ENCODE measurements at regions of chr2 and their contacts with region 1.

Region 1: GRCh38 chr2:86368161-86368824 is 30.9 kb upstream of the REEP1 start:
- DNase-seq: peak; percentile 43
- H3K4me3 Mint-ChIP-seq: no peak overlapping the region
- H3K27ac Mint-ChIP-seq: no peak overlapping the region
- H3K4me1 Mint-ChIP-seq: peaks cover 25% of the 10 kb centered on the region
- H3K27me3 Mint-ChIP-seq: peaks cover 2% of the 10 kb centered on the region

Region 2: DNA sequence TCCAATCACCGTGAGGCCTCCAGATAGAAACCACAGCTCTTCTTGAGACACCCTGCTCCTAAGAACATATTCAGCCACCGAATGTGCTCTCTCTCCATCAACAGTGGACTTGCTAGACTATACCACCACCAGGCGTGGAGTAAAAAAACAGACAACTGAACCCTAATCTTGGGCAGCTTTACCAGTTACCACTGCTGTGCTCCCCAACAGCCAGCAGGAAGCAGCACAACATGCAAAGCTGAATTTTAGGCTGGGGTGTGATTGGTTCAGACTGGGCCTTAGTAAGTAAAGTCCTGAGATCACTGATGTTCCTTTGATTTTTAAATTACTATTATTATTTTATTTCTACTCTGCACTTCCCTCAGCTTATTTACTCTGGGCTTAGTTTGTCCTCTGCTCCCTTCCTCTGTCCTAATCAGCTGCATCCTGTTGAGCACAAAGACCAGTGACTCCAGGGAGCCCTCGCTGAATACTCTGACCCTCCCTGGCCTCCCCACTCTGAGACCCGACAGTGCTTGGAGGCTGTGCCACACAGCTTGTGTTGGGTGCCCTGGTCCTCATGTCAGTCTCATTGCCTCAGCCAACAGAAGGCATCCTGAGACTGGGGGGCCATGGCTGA is 147.1 kb before region 1 on chr2:
- CTCF ChIA-PET with region 1: interaction called, 29 read pairs
- POLR2A ChIA-PET with region 1: interaction called, 3 read pairs
- DNase-seq: peak; percentile 72
- H3K4me3 Mint-ChIP-seq: no peak overlapping the region
- H3K27ac Mint-ChIP-seq: no peak overlapping the region
- H3K4me1 Mint-ChIP-seq: peaks cover 46% of the 10 kb centered on the region
- H3K27me3 Mint-ChIP-seq: no peaks in the 10 kb centered on the region

Measured in activated CD4-positive, alpha-beta memory T cell treated with anti-CD3 and anti-CD28 coated beads, Interleukin-2, amount 10 ng/mL, durations not matched to agents 7 days and 5 days (primary cell).